Activated CD4-positive, alpha-beta memory T cell treated with anti-CD3 and anti-CD28 coated beads for 36 hours (primary cell): ENCODE measurements at regions of chr16 and their contacts with region 1.

Region 1: DNA sequence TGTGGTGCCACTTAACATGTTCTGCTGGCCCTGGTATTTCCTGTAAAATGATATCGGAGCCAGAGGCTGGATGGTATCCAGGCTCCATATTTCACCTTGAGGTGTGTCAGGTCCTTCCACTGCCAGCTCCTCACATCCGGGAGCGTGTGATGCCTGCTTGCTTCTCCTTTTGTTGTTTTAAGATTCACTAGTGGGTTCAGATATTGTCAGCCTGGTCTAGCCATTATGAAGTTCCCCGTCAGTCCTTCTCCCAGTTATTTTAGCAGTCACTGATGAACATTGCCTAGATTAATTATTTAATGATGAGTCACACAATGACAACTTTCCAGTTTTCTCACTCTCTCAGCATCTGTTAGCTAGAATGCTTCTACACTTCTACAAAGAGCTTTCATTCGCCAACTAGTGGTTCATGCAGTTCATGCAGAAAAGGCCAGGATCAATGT is 11.3 kb downstream of the DNAAF1 start:
- DNase-seq: no peak
- H3K4me3 Mint-ChIP-seq: no peak overlapping the region
- H3K27ac Mint-ChIP-seq: no peak overlapping the region
- H3K4me1 Mint-ChIP-seq: no peaks in the 10 kb centered on the region
- H3K27me3 Mint-ChIP-seq: peaks cover 26% of the 10 kb centered on the region

Region 2: DNA sequence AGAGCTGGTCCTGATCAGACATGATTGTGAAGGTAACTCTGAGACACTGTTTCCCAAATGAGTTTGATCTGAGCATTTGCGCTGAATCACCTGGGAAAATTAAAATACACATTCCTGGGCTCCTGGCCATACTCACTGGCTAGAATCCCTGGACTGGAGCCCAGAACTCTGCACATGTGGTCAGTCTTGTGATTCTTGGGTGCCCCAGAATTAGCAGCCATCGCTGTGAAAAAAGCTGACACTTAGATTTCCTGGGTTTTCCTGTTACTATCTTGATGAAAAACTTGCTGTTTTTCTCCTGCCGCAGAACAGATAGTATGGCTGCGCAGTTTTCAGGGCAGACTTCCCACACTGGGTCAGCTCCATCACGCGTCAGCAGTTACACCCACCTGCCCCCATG is 163.7 kb before region 1 on chr16:
- CTCF ChIA-PET with region 1: no interaction called
- POLR2A ChIA-PET with region 1: no interaction called
- intact Hi-C with region 1: no loop called
- DNase-seq: no peak
- H3K4me3 Mint-ChIP-seq: no peak overlapping the region
- H3K27ac Mint-ChIP-seq: no peak overlapping the region
- H3K4me1 Mint-ChIP-seq: no peaks in the 10 kb centered on the region
- H3K27me3 Mint-ChIP-seq: peaks cover 48% of the 10 kb centered on the region

Region 3: DNA sequence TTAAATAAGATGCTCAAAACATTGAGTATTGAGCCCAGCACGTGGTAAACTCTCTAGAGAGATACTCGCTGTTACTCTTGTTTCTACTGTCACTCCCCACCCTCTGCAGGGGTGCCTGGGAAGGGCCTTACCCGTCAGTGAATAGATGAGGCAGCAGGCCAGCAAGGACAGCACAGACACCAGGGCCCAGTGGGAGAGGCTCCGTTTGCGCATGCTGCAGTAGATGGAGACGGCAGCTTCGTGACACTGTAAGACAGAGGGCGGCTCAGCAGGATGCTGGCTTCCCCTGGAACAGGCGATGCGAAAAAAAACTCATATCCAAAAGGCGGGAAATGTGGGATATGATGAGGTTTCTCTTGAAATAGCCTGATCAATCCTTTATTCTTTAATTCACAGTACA is 133.7 kb before region 1 on chr16:
- CTCF ChIA-PET with region 1: no interaction called
- POLR2A ChIA-PET with region 1: interaction called, 10 read pairs
- intact Hi-C with region 1: no loop called
- DNase-seq: no peak
- H3K4me3 Mint-ChIP-seq: no peak overlapping the region
- H3K27ac Mint-ChIP-seq: no peak overlapping the region
- H3K4me1 Mint-ChIP-seq: no peaks in the 10 kb centered on the region
- H3K27me3 Mint-ChIP-seq: peaks cover 11% of the 10 kb centered on the region